Upper lobe of right lung (tissue), 1 donor: ENCODE measurements at regions of chr17 and their contacts with region 1.

Region 1: DNA sequence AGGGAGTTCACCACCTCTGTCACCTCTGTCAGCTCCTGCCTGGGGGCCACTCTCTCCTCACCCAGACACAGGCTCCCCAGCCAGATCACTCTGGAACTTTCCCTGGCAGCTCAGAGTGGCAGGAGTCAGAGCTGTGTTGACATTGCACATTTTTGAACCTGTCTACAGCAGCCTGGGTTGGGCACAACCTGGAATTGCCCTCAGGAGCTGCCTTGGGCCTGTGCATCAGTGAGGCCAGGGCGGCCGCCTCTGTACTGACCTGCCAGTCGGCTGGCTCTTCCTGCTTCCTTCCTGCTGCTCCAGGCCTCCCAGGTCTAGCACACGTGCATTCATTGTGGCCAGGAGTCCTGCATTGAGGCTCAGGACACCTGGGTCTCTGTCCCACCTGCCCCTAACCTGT is 14.1 kb upstream of the TMEM11 start:
- DNase-seq: no peak
- ATAC-seq: peak; percentile 87
- H3K4me3 ChIP-seq: no peak overlapping the region
- H3K27ac ChIP-seq: peak overlapping the region; percentile 11
- H3K4me1 ChIP-seq: no peaks in the 10 kb centered on the region
- H3K27me3 ChIP-seq: no peaks in the 10 kb centered on the region
- CTCF ChIP-seq: no peak

Region 2: DNA sequence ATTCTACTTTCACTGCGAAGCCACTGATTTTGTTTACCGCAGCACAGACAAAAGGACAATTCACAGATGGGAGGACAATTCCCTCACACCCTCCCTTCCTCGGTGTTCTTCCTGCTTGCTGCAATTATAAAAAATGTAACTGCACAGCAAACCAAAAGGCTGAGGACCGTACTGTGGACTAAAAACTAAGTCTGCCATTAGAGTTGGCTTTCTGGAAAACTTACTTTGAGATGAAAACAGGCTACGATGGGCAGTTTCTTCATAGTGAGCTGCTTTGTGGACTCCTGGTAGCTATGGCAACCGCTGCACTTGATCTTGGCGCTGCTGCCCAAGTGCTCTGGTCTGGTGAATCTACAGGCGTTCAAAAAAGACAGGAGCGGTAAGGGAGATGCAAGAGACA is 220.5 kb before region 1 on chr17:
- intact Hi-C with region 1: no loop called
- DNase-seq: peak; percentile 27
- ATAC-seq: no peak
- H3K4me3 ChIP-seq: no peak overlapping the region
- H3K27ac ChIP-seq: no peak overlapping the region
- H3K4me1 ChIP-seq: no peaks in the 10 kb centered on the region
- H3K27me3 ChIP-seq: no peaks in the 10 kb centered on the region
- CTCF ChIP-seq: no peak

Region 3: GRCh38 chr17:21161498-21162393 is 66.4 kb before region 1 on chr17:
- intact Hi-C with region 1: loop called (anchors 10 kb)
- DNase-seq: no peak
- ATAC-seq: no peak
- H3K4me3 ChIP-seq: no peak overlapping the region
- H3K27ac ChIP-seq: peak overlapping the region; percentile 63
- H3K4me1 ChIP-seq: peaks cover 43% of the 10 kb centered on the region
- H3K27me3 ChIP-seq: no peaks in the 10 kb centered on the region
- CTCF ChIP-seq: no peak

Region 4: DNA sequence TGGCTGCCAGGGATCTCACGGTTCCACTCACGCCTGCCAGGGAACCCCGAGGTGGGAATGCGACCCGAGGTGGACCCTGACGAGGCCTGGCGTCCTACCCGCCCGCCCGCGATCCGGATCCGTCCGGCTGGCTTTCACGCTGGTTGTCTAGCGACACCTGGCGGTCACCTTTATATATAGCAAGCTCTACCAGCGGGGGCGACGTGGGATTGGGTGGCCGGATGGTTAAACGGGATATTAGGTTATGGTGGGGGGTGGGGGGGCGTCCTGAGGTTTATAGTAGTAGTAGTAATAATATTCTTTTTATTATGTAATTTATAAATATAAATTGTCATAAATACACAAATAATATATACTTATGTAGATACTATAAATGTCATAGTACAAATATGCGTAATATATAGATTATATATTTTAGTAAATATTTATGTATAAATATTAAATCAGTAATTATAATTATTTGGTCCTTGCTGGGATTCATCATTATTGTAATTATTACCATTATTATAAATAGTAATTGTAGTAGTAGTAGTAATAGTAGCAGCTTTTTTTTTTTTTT is 285.0 kb after region 1 on chr17:
- intact Hi-C with region 1: no loop called
- DNase-seq: peak; percentile 85
- ATAC-seq: peak; percentile 83
- H3K4me3 ChIP-seq: no peak overlapping the region
- H3K27ac ChIP-seq: no peak overlapping the region
- H3K4me1 ChIP-seq: peaks cover 4% of the 10 kb centered on the region
- H3K27me3 ChIP-seq: no peaks in the 10 kb centered on the region
- CTCF ChIP-seq: peak; percentile 72